Transverse colon (tissue), 4 donors: ENCODE measurements at regions of chr21 and their contacts with region 1.

Region 1: DNA sequence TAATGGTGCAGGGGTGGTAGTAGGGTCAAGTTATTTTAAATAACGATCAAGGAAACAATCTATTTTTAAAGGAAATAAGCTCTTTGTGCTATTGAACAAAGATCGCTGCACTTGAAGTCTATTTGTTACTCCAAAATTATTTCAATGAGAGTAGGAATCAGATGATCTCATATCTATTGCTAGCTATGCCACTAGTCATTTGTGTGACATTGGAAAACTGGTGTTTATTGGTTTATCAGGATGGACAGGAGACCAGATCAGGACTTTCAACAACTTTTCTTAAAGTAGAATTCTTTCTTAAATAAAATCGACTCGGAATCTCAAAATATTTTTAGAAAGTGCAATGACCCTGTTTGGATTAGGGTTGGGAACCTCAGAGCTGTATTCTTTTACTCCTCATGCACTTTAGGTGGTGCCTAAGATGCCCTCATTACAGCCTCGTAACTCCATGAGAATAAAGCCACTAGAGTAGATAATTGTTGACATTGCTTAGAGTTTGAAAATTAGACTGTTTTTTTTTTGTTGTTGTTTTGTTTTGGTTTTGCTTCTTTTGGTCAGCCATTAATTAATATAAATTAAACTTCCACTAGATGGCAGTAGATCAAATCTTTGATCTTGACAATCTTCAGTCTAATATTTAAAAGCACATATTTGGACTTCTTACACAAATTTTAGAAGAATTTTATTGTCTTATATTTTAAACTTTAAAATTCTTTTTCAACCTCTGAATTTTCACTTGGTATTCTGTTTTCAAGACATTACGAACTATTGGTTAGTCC is 352.4 kb downstream of the USP25 start:
- DNase-seq: no peak
- H3K4me3 ChIP-seq: no peak overlapping the region
- H3K27ac ChIP-seq: no peak overlapping the region
- H3K4me1 ChIP-seq: no peaks in the 10 kb centered on the region
- H3K27me3 ChIP-seq: no peaks in the 10 kb centered on the region
- CTCF ChIP-seq: peak in 3 of 5 experiments; percentile 28 to 41 (median 32)
- EP300 ChIP-seq: no peak
- POLR2A ChIP-seq: no peak

Region 2: GRCh38 chr21:16330082-16330907 is 248.1 kb after region 1 on chr21:
- in situ Hi-C with region 1: loop called in 2 of 4 experiments (anchors 25 kb)
- intact Hi-C with region 1: no loop called
- DNase-seq: no peak
- H3K4me3 ChIP-seq: no peak overlapping the region
- H3K27ac ChIP-seq: no peak overlapping the region
- H3K4me1 ChIP-seq: no peaks in the 10 kb centered on the region
- H3K27me3 ChIP-seq: no peaks in the 10 kb centered on the region
- CTCF ChIP-seq: peak; percentile 31 to 68 (median 54)
- EP300 ChIP-seq: no peak
- POLR2A ChIP-seq: no peak